Colonic mucosa (tissue), 4 donors: ENCODE measurements at regions of chr13 and their contacts with region 1.

Region 1: GRCh38 chr13:61128850-61129645 is 286.6 kb downstream of the PCDH20 start:
- DNase-seq: no peak
- H3K4me3 ChIP-seq: no peak overlapping the region
- H3K27ac ChIP-seq: no peak overlapping the region
- H3K4me1 ChIP-seq: no peaks in the 10 kb centered on the region
- H3K27me3 ChIP-seq: no peaks in the 10 kb centered on the region
- CTCF ChIP-seq: no peak

Region 2: GRCh38 chr13:61255035-61255796 is 126.2 kb after region 1 on chr13:
- intact Hi-C with region 1: loop called (anchors 10 kb)
- DNase-seq: no peak
- H3K4me3 ChIP-seq: no peak overlapping the region
- H3K27ac ChIP-seq: no peak overlapping the region
- H3K4me1 ChIP-seq: no peaks in the 10 kb centered on the region
- H3K27me3 ChIP-seq: no peaks in the 10 kb centered on the region
- CTCF ChIP-seq: no peak

Region 3: GRCh38 chr13:61410669-61411297 is 281.7 kb after region 1 on chr13:
- intact Hi-C with region 1: loop called (anchors 5 kb)
- DNase-seq: no peak
- H3K4me3 ChIP-seq: no peak overlapping the region
- H3K27ac ChIP-seq: no peak overlapping the region
- H3K4me1 ChIP-seq: no peaks in the 10 kb centered on the region
- H3K27me3 ChIP-seq: no peaks in the 10 kb centered on the region
- CTCF ChIP-seq: peak; percentile 25

Region 4: GRCh38 chr13:61546413-61546812 is 417.4 kb after region 1 on chr13:
- intact Hi-C with region 1: no loop called
- DNase-seq: no peak
- H3K4me3 ChIP-seq: no peak overlapping the region
- H3K27ac ChIP-seq: no peak overlapping the region
- H3K4me1 ChIP-seq: no peaks in the 10 kb centered on the region
- H3K27me3 ChIP-seq: no peaks in the 10 kb centered on the region
- CTCF ChIP-seq: no peak